ENCODE measurements at regions of chr1 and their contacts with region 1.

Region 1: GRCh38 chr1:150979092-150980056 is 2.7 kb upstream of the ANXA9 start:
- DNase-seq: peak; percentile 83 to 93 (median 90)
- ATAC-seq: peak; percentile 62
- H3K4me3 ChIP-seq: peak overlapping the region; percentile 22 to 32
- H3K4me3 Mint-ChIP-seq: peak overlapping the region; percentile 57
- H3K27ac ChIP-seq: peak overlapping the region in 1 of 2 experiments; percentile 47
- H3K27ac Mint-ChIP-seq: peak overlapping the region; percentile 3
- H3K4me1 ChIP-seq: peaks cover 41% of the 10 kb centered on the region
- H3K4me1 Mint-ChIP-seq: peaks cover 38% of the 10 kb centered on the region
- H3K27me3 ChIP-seq: no peaks in the 10 kb centered on the region
- H3K27me3 Mint-ChIP-seq: no peaks in the 10 kb centered on the region
- CTCF ChIP-seq: peak; percentile 100

Region 2: DNA sequence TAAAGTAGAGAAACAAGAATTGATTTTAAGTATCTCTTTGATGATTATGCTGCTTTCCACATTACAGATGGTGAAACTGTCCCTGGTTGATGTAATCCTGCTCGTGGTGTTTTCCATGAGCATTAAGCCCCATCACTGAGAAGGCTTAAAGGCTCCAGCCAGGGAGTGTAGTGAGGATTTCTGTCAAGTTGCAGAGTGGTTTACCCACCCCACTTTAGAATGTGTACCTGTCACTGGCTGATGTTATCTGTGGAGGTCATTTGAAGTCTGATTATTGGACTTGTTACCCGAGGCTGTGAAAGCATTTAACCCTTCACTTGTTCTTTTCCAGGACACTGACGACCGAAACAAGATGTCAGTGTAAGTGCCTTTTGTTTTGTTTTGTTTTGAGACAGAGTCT is 17.6 kb before region 1 on chr1:
- CTCF ChIA-PET with region 1: interaction called, 7 read pairs
- POLR2A ChIA-PET with region 1: interaction called, 6 read pairs
- intact Hi-C with region 1: loop called in 1 of 2 experiments (anchors 2 kb)
- DNase-seq: no peak
- ATAC-seq: no peak
- H3K4me3 ChIP-seq: no peak overlapping the region
- H3K4me3 Mint-ChIP-seq: no peak overlapping the region
- H3K27ac ChIP-seq: no peak overlapping the region
- H3K27ac Mint-ChIP-seq: peak overlapping the region; percentile 49
- H3K4me1 ChIP-seq: no peaks in the 10 kb centered on the region
- H3K4me1 Mint-ChIP-seq: no peaks in the 10 kb centered on the region
- H3K27me3 ChIP-seq: no peaks in the 10 kb centered on the region
- H3K27me3 Mint-ChIP-seq: no peaks in the 10 kb centered on the region
- CTCF ChIP-seq: no peak

Region 3: DNA sequence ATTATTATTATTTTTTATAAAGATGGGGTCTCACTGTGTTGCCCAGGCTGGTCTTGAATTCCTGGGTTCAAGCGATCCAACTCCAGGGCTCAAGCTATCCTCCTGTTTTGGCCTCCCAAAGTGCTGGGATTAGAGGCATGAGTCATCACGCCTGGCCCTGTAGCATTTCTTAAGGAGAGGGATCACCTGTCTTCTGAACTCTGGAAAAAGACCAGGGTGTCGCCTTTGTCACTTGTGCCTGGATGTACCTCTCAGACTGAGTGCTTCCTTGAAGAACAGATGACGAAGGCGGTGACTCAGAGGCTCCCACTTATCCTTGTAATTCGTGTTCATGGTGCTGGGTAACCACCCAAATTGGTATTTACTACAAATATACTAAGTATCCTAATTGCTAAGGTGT is 529.5 kb after region 1 on chr1:
- CTCF ChIA-PET with region 1: no interaction called
- POLR2A ChIA-PET with region 1: no interaction called
- intact Hi-C with region 1: no loop called
- DNase-seq: no peak
- ATAC-seq: no peak
- H3K4me3 ChIP-seq: no peak overlapping the region
- H3K4me3 Mint-ChIP-seq: no peak overlapping the region
- H3K27ac ChIP-seq: no peak overlapping the region
- H3K27ac Mint-ChIP-seq: no peak overlapping the region
- H3K4me1 ChIP-seq: peaks cover 21% of the 10 kb centered on the region
- H3K4me1 Mint-ChIP-seq: peaks cover 25% of the 10 kb centered on the region
- H3K27me3 ChIP-seq: no peaks in the 10 kb centered on the region
- H3K27me3 Mint-ChIP-seq: no peaks in the 10 kb centered on the region
- CTCF ChIP-seq: no peak

Measured in CD8-positive, alpha-beta T cell (primary cell).